ENCODE measurements at regions of chr21 and their contacts with region 1.

Region 1: DNA sequence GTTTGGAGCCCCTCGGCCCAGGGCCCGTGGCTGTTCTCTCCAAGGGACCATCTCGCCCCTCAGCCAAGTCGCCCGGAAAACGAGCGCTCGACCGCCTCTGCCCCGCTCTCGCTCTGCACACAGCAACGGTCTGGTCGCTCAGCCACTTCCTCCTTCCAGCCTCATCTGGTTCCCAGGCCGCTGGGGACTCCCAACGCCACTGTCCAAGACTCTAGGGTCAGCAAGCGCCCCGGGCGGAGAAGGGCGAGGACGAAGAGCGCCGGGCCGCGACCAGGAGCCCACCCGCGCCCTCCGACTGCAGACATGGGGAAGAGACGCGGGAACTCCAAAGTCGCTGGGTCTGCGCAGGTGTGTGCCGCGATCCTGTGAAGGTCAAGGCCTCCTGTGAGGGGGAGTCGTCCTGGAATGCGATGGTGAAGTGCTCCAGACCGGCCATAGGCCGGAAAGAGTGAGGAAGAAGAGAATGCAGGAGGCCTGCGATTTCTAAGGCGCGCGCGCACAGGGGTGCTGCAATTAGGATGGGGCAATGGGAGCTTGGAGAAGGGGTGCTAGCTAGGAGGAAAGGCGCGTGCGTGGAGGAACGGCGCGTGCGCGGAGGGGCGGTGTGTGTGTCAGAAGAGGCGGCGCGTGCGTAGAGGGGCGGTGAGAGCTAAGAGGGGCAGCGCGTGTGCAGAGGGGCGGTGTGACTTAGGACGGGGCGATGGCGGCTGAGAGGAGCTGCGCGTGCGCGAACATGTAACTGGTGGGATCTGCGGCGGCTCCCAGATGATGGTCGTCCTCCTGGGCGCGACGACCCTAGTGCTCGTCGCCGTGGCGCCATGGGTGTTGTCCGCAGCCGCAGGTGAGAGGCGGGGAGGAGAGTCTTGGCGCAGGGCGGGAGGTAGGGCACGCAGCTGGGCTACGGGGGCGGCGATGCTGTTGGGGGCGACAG is at the start of gene IFNAR1:
- DNase-seq: peak; percentile 98
- H3K4me3 Mint-ChIP-seq: no peak within 1 kb of the TSS
- H3K27ac Mint-ChIP-seq: no peak within 1 kb of the TSS
- H3K4me1 Mint-ChIP-seq: peaks cover 8% of the 10 kb centered on the region
- H3K27me3 Mint-ChIP-seq: no peaks in the 10 kb centered on the region
- CTCF ChIP-seq: no peak
- total RNA-seq, gene IFNAR1: 30.0 and 35.5 TPM in 2 replicates

Region 2: GRCh38 chr21:32494934-32495703 is 829.4 kb before region 1 on chr21:
- CTCF ChIA-PET with region 1: no interaction called
- POLR2A ChIA-PET with region 1: no interaction called
- intact Hi-C with region 1: no loop called
- DNase-seq: peak; percentile 39
- H3K4me3 Mint-ChIP-seq: no peak overlapping the region
- H3K27ac Mint-ChIP-seq: no peak overlapping the region
- H3K4me1 Mint-ChIP-seq: peaks cover 10% of the 10 kb centered on the region
- H3K27me3 Mint-ChIP-seq: no peaks in the 10 kb centered on the region
- CTCF ChIP-seq: no peak

Region 3: GRCh38 chr21:33169359-33169758 is 155.2 kb before region 1 on chr21:
- CTCF ChIA-PET with region 1: no interaction called
- POLR2A ChIA-PET with region 1: no interaction called
- intact Hi-C with region 1: no loop called
- DNase-seq: no peak
- H3K4me3 Mint-ChIP-seq: no peak overlapping the region
- H3K27ac Mint-ChIP-seq: no peak overlapping the region
- H3K4me1 Mint-ChIP-seq: peaks cover 5% of the 10 kb centered on the region
- H3K27me3 Mint-ChIP-seq: peaks cover 85% of the 10 kb centered on the region
- CTCF ChIP-seq: no peak

Region 4: GRCh38 chr21:33205476-33205875 is 119.1 kb before region 1 on chr21:
- CTCF ChIA-PET with region 1: no interaction called
- POLR2A ChIA-PET with region 1: interaction called, 25 read pairs
- intact Hi-C with region 1: no loop called
- DNase-seq: no peak
- H3K4me3 Mint-ChIP-seq: no peak overlapping the region
- H3K27ac Mint-ChIP-seq: peak overlapping the region; percentile 98
- H3K4me1 Mint-ChIP-seq: peaks cover 27% of the 10 kb centered on the region
- H3K27me3 Mint-ChIP-seq: no peaks in the 10 kb centered on the region
- CTCF ChIP-seq: no peak

Region 5: DNA sequence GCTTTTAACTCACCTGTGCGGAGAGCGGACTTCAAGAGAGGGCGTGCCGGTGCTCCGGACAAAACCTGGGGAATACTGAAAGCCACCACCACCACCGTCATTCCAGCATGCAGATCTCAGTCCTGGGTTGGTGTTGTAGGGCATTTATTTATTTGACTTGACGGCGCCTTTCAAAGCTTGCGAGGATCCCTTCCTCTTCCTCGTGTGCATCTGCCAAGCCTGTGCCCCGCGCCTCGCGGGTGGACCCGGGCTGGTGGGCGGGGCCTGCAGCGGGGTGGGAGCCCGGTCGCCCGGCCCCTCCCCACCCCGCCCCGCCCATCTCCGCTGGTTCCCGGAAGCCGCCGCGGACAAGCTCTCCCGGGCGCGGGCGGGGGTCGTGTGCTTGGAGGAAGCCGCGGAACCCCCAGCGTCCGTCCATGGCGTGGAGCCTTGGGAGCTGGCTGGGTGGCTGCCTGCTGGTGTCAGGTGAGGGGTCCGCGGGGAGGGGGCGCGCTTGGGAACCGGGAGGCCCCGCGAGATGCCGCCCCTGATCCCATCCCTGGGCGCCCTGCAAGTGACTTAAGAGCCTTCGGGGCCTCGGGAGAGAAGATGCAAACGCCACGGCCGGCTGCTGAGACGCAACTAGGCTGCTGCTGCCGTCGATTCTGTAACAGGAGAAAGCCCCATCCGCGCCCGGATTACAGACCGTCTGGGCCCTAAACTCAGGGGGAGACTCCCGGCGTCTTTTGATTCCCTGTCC is 58.3 kb before region 1 on chr21 and contains the start of gene IL10RB:
- CTCF ChIA-PET with region 1: no interaction called
- POLR2A ChIA-PET with region 1: interaction called, 53 read pairs
- intact Hi-C with region 1: no loop called
- DNase-seq: peak; percentile 56
- H3K4me3 Mint-ChIP-seq: peak within 1 kb of the TSS; percentile 75
- H3K27ac Mint-ChIP-seq: peak within 1 kb of the TSS; percentile 63
- H3K4me1 Mint-ChIP-seq: peaks cover 25% of the 10 kb centered on the region
- H3K27me3 Mint-ChIP-seq: no peaks in the 10 kb centered on the region
- CTCF ChIP-seq: no peak
- total RNA-seq, gene IL10RB: 23.2 and 26.3 TPM in 2 replicates

Region 6: DNA sequence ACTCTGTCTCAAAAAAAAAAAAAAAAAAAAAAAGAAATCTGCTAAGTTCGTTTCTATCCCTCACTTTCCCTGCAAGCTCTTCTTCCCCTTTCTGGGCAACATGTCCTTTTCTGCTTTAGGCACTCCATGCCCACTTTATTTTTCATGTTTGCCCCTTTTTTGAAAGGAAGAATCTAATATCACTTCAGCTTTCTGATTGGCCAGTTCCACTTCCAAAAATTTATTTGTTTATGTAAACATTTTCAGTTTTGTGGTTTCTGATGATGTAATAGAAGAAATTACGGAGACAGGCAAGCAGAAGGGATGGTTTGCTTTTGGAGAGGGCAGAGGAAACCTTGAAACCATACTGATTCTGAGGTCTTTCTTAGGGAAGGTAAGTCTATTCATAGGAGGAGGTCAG is 15.4 kb after region 1 on chr21:
- CTCF ChIA-PET with region 1: no interaction called
- POLR2A ChIA-PET with region 1: interaction called, 15 read pairs
- intact Hi-C with region 1: no loop called
- DNase-seq: no peak
- H3K4me3 Mint-ChIP-seq: no peak overlapping the region
- H3K27ac Mint-ChIP-seq: peak overlapping the region; percentile 70
- H3K4me1 Mint-ChIP-seq: no peaks in the 10 kb centered on the region
- H3K27me3 Mint-ChIP-seq: no peaks in the 10 kb centered on the region
- CTCF ChIP-seq: no peak

Region 7: GRCh38 chr21:33403779-33404585 is 79.4 kb after region 1 on chr21:
- CTCF ChIA-PET with region 1: interaction called, 3 read pairs
- POLR2A ChIA-PET with region 1: interaction called, 10 read pairs
- intact Hi-C with region 1: no loop called
- DNase-seq: peak; percentile 45
- H3K4me3 Mint-ChIP-seq: peak overlapping the region; percentile 92
- H3K27ac Mint-ChIP-seq: peak overlapping the region; percentile 96
- H3K4me1 Mint-ChIP-seq: peaks cover 26% of the 10 kb centered on the region
- H3K27me3 Mint-ChIP-seq: no peaks in the 10 kb centered on the region
- CTCF ChIP-seq: no peak

Region 8: DNA sequence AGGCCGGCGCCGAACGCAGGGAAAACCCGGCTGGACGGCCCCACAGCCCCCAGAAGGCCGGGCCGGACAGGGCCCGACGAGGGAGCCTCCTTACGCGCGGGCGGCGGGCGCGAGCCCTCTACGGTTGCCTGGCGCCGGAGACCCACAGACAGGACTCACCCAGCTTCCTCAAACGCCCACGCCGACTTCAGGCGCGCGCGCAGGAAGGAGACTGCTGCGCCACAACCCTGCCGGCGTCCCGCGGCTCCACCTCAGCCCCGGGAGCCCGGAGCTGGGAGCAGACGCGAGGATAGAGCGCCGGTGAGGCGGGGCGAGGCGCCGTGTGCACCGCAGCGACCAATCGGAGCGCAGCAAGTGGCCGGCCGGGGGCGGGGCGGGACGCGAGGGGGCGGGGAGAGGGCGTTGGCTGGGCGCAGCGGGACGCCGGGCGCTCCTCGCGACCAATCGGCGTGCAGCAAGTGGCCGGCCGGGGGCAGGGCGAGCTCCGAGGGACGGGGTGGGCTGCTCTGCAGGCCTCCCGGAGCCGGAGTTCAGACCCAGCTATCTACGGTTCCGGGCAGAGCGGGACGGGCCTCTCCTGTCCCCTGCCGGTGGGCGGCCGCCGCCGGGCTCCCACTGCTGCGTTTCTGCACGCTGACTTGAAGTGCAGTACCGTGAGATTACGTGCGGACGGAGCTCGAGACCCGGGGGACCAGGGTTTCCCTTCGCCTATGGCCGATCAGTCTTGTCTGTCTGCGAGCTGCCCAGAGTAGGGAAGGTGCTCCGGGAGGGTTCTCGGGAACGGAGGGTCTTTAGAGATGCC is 155.3 kb after region 1 on chr21 and contains the start of gene TMEM50B:
- CTCF ChIA-PET with region 1: no interaction called
- POLR2A ChIA-PET with region 1: interaction called, 13 read pairs
- intact Hi-C with region 1: no loop called
- DNase-seq: peak; percentile 95
- H3K4me3 Mint-ChIP-seq: peak within 1 kb of the TSS; percentile 87
- H3K27ac Mint-ChIP-seq: peak within 1 kb of the TSS; percentile 74
- H3K4me1 Mint-ChIP-seq: peaks cover 5% of the 10 kb centered on the region
- H3K27me3 Mint-ChIP-seq: no peaks in the 10 kb centered on the region
- CTCF ChIP-seq: peak; percentile 30
- total RNA-seq, gene TMEM50B: 20.7 and 27.8 TPM in 2 replicates